ENCODE measurements at regions of chr3 and their contacts with region 1.

Region 1: GRCh38 chr3:159828542-159828943 is 160.1 kb upstream of the IL12A start:
- DNase-seq: no peak
- H3K4me3 Mint-ChIP-seq: no peak overlapping the region
- H3K27ac Mint-ChIP-seq: no peak overlapping the region
- H3K4me1 Mint-ChIP-seq: no peaks in the 10 kb centered on the region
- H3K27me3 Mint-ChIP-seq: peaks cover 2% of the 10 kb centered on the region

Region 2: GRCh38 chr3:159340877-159341500 is 487.6 kb before region 1 on chr3:
- CTCF ChIA-PET with region 1: no interaction called
- intact Hi-C with region 1: no loop called
- DNase-seq: no peak
- H3K4me3 Mint-ChIP-seq: no peak overlapping the region
- H3K27ac Mint-ChIP-seq: no peak overlapping the region
- H3K4me1 Mint-ChIP-seq: no peaks in the 10 kb centered on the region
- H3K27me3 Mint-ChIP-seq: no peaks in the 10 kb centered on the region

Region 3: GRCh38 chr3:159763602-159764489 is 64.7 kb before region 1 on chr3:
- CTCF ChIA-PET with region 1: no interaction called
- intact Hi-C with region 1: loop called (anchors 2 kb)
- DNase-seq: peak; percentile 23
- H3K4me3 Mint-ChIP-seq: peak overlapping the region; percentile 75
- H3K27ac Mint-ChIP-seq: no peak overlapping the region
- H3K4me1 Mint-ChIP-seq: peaks cover 16% of the 10 kb centered on the region
- H3K27me3 Mint-ChIP-seq: peaks cover 45% of the 10 kb centered on the region

Region 4: DNA sequence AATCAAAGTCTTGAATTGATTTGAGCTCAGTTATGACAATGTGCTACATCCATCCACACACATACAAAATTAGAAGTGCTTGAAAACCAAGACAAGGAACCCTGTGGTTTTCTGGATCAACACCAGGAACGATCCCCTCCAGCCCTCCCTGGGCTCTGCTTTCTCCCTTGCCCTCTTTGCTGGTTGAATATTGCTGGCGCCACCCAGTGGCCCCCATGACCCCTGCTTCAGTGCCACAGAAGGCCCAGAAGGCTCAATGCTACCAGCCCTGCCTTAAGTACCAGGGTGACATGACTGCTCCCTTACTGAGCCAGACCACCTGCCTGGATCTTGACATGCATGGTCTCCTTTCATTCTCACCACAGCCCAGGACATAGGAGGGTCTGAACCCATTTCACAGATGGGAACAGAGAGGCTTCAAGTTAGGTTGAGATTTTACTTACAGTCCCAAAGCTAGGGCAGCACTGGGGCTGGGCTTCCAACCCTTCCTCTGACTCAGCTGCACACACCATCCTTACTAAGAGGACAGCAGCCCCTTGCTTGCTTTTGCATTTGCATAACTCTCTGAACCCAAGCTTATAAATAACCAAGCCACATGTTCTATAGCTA is 175.1 kb after region 1 on chr3:
- CTCF ChIA-PET with region 1: interaction called, 5 read pairs
- intact Hi-C with region 1: loop called (anchors 1 kb)
- DNase-seq: peak; percentile 62
- H3K4me3 Mint-ChIP-seq: no peak overlapping the region
- H3K27ac Mint-ChIP-seq: no peak overlapping the region
- H3K4me1 Mint-ChIP-seq: no peaks in the 10 kb centered on the region
- H3K27me3 Mint-ChIP-seq: no peaks in the 10 kb centered on the region